Dorsolateral prefrontal cortex (tissue), 120 donors: ENCODE measurements at regions of chr2 and their contacts with region 1.

Region 1: DNA sequence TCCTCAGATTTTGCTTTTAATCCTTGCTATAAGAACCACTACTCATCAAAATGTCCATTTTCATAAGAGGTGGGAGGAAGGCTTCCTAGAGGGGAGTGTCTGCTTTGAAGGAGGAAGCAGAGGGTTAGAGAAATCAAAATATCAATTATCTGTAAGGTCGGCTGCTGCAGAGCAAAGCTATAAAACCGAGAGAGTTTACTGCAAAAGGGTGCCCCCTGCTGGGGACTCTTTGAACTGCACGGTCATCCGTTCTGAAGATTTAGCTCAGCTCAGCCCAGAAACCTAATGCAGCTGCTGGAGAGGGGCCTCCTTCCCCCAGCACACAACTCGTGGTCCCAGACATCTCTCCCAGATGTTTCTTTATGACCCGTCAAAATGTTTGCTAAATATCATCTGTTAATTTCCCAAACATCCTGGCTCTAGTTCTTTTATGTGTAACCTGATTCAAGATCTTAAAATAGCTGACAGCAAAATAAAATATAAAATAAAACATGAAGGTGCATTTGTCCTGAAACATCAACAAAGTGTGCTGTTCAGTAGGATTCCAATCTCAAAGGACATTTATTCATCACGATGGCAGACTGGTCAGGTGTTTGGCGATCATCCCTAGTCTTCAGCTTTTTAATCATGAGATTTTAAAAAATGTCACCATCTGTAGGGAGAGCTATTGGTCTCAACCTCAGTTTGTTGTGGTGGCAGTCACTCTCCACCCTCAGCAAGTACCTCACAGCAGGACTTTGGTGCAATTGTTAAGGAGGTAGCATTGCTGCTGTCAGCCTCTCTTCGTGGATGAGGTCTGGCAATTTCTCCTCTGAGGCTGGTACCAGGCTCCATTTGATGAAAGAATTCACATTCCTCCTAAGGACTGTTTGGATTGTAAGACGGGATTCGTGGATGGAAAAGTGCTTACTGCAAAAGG is 185.9 kb downstream of the MTX2 start:
- DNase-seq: peak; percentile 67 to 95 (median 86)
- H3K4me3 ChIP-seq: no peak overlapping the region
- H3K27ac ChIP-seq: peak overlapping the region in 25 of 59 donors; percentile 1 to 61 (median 37)
- H3K27me3 ChIP-seq: peaks cover 0 to 34% (median 0%) of the 10 kb centered on the region in 45 donors
- CTCF ChIP-seq: peak in 55 of 56 donors; percentile 89 to 99 (median 96)

Region 2: DNA sequence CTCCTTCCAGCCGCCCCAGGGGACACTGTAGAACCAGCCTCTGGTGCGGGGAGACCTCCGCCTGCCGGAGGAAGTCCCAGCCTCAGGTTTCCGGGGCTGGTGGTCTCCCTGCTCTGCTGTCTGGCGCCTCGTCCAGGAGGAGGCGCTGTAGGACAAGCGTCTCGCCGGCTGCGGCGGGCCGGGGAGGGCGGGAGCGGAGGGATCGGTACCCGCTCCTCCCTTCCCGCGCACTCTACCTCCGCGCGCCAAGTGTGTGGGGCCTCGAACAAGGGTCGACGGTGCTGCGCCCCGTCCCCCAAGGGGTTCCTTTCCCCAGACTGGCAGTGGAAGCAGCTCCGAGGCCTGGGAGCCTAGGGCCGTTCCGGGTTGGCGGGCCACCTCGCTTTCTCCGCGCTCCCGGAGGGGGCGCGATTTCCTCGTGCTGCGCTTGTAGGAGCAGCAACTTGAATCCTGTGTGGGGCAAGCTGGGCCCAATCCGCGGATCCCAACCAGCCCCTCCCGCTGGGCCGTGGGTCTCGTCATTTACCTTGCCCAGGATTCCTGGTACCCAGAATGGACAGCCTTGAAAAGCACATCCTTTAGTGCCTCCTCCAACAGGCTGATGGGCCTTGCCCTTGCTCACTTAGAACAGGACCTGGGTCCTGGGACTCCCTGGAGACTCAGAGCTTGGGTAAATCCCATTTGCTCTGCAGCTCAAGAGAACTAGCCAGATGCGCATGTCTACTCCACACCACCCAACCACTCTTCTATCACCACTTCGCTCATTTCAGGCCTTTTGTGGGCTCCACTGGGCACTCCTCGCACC is 314.4 kb before region 1 on chr2:
- intact Hi-C with region 1: loop called (anchors 1 to 2 kb)
- DNase-seq: peak in 9 of 10 donors; percentile 16 to 84 (median 55)
- H3K4me3 ChIP-seq: peak overlapping the region; percentile 20 to 77 (median 60)
- H3K27ac ChIP-seq: peak overlapping the region in 6 of 59 donors; percentile 32 to 74 (median 52)
- H3K27me3 ChIP-seq: peaks cover 4 to 99% (median 85%) of the 10 kb centered on the region in 45 donors
- CTCF ChIP-seq: peak; percentile 55 to 99 (median 92)

Region 3: GRCh38 chr2:176178038-176178756 is 277.0 kb before region 1 on chr2:
- intact Hi-C with region 1: loop called in 1 of 2 experiments (anchors 10 kb)
- DNase-seq: no peak
- H3K4me3 ChIP-seq: peak overlapping the region in 48 of 59 donors; percentile 5 to 63 (median 36)
- H3K27ac ChIP-seq: peak overlapping the region in 12 of 59 donors; percentile 20 to 72 (median 54)
- H3K27me3 ChIP-seq: peaks cover 12 to 95% (median 74%) of the 10 kb centered on the region in 45 donors
- CTCF ChIP-seq: no peak

Region 4: GRCh38 chr2:176187899-176188773 is 267.0 kb before region 1 on chr2 and contains the start of gene HOXD1:
- intact Hi-C with region 1: loop called in 1 of 2 experiments (anchors 5 kb)
- DNase-seq: peak in 8 of 10 donors; percentile 55 to 82 (median 70)
- H3K4me3 ChIP-seq: peak within 1 kb of the TSS; percentile 34 to 79 (median 61)
- H3K27ac ChIP-seq: peak within 1 kb of the TSS in 44 of 59 donors; percentile 9 to 90 (median 72)
- H3K27me3 ChIP-seq: peaks cover 16 to 93% (median 79%) of the 10 kb centered on the region in 45 donors
- CTCF ChIP-seq: peak in 1 of 56 donors; percentile 2
- total RNA-seq, gene HOXD1: 0.23 to 9.3 (median 1.6) TPM in 113 of 120 experiments, not detected in the others

Region 5: DNA sequence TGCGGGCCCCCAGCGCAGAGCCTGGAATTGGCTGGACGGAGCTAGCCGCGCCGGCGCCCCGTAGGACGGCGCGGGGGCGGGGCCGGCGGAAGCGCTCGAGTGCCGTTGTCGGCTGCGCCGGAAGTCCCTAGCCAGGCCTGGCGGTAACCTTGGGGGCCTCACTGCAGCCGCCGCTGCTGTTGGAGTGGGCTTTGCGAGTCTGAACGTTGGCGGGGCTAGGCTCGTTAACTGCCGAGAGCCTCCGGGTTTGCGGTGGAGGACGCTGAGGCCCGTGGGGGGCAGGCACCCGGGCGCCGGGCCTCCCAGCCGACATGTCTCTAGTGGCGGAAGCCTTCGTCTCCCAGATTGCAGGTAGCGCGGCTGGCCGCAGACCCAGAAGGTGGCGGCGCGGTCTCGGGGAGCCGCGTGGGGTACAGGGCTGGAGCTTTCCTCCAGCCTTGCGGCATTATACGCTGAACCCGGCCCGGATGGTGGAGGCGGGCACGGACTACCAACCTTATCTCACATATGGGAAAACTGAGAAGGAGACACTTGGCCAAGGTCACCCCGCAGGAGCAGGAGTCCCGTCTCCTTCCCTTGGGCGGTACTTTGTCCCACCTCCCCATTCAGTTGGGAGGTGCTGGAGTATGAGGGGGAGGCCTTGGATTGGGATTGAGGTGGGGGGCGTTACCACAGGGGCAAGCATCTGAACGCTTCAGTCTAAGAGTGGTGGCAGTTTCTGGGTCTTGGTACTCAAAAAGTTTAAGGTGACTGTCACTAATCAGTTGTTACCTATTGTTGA is 185.6 kb before region 1 on chr2 and contains the start of gene MTX2:
- intact Hi-C with region 1: loop called (anchors 10 kb)
- DNase-seq: peak; percentile 53 to 89 (median 66)
- H3K4me3 ChIP-seq: peak within 1 kb of the TSS; percentile 46 to 99 (median 92)
- H3K27ac ChIP-seq: peak within 1 kb of the TSS in 58 of 59 donors; percentile 28 to 94 (median 80)
- H3K27me3 ChIP-seq: no peaks in the 10 kb centered on the region
- CTCF ChIP-seq: peak in 41 of 56 donors; percentile 9 to 56 (median 35)
- total RNA-seq, gene MTX2: 17.0 to 45.9 (median 34.0) TPM

Region 6: DNA sequence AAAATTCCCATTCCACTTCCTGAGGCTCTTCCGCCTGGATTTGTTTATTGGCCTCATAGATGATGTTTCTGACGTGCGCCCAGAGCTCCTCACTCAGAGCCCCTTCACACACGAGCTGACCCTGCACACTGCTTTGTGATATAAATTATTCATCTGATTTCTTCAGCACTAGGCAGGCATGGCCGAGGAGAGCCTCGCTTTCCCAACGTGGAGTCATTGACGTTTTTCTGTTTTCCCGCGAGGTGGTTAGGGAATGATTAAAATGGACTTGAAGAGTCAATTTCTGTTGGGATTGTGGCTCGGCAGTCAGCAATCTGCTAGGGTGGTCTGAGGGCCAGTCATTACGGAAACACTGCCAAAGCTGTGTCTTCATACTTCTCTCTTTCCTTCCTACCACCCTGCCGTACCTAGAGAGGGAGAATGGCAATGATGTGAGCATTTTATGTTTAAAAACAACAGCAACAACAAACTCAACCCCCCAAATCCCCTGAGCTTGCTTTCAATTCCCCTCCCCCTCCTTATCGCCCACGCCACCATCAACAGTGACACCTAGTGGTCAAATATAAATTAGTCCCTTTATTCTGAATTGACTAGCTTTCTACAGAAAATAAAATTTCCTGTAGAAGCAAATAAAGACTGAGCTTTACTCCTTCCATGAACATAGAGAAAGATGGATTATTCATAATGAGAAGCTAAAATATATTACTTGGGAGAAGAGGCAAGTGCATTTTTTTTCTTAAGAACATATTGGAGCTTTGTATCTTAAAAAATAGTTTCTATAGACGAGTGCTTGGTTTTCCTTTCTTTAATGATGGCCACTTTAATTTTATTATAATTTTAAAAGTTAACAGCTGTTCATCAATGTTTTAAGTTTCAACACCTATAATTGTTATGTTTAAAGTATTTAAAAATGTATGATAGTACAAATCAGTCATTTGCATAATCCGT is 99.2 kb after region 1 on chr2:
- intact Hi-C with region 1: loop called (anchors 5 to 10 kb)
- DNase-seq: peak in 3 of 10 donors; percentile 27 to 42 (median 31)
- H3K4me3 ChIP-seq: peak overlapping the region; percentile 21 to 77 (median 57)
- H3K27ac ChIP-seq: peak overlapping the region in 44 of 59 donors; percentile 9 to 83 (median 60)
- H3K27me3 ChIP-seq: peaks cover 0 to 55% (median 12%) of the 10 kb centered on the region in 45 donors
- CTCF ChIP-seq: peak; percentile 68 to 89 (median 81)